ENCODE measurements at regions of chr10 and their contacts with region 1.

Region 1: DNA sequence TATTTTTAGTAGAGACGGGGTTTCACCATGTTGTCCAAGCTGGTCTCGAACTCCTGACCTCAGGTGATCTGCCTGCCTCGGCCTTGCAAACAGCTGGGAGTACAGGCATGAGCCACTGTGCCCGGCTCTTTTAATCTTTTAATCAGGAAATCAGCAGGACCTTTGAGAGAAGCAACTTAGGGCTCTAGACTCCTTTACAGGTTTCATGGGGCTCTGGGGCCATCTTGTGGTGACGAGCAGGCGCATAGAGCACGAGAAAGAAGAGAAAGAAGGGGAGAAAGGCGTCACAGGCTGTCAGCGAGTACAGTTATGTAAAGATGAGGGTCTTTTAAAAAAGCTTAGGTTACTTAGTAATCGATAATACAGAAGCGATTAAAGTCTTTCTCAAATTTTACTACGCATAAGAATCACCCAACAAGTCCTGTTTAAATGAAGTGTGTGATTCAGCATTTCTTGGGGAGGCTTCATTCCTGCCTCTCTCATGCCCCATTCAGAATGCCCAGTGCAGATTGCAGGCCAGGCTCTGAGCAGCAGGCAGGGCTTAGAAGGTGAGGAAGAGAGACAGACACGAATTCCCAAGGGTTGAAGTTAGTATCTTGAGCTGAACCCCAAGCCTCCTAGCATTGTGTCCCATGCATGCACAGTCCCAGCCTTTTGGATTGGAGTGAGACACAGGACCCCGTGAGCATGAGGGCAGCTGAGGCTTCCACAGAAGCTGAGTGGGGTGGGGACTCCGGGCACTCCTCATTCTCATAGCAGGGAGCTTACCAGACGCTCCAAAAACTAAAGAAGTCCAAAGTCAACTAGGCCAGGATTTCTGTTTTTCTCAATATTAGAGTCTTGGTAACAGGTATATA is 23.6 kb upstream of the PFKP start:
- DNase-seq: peak; percentile 53
- H3K4me3 Mint-ChIP-seq: no peak overlapping the region
- H3K27ac Mint-ChIP-seq: no peak overlapping the region
- H3K4me1 Mint-ChIP-seq: no peaks in the 10 kb centered on the region
- H3K27me3 Mint-ChIP-seq: peaks cover 15% of the 10 kb centered on the region

Region 2: DNA sequence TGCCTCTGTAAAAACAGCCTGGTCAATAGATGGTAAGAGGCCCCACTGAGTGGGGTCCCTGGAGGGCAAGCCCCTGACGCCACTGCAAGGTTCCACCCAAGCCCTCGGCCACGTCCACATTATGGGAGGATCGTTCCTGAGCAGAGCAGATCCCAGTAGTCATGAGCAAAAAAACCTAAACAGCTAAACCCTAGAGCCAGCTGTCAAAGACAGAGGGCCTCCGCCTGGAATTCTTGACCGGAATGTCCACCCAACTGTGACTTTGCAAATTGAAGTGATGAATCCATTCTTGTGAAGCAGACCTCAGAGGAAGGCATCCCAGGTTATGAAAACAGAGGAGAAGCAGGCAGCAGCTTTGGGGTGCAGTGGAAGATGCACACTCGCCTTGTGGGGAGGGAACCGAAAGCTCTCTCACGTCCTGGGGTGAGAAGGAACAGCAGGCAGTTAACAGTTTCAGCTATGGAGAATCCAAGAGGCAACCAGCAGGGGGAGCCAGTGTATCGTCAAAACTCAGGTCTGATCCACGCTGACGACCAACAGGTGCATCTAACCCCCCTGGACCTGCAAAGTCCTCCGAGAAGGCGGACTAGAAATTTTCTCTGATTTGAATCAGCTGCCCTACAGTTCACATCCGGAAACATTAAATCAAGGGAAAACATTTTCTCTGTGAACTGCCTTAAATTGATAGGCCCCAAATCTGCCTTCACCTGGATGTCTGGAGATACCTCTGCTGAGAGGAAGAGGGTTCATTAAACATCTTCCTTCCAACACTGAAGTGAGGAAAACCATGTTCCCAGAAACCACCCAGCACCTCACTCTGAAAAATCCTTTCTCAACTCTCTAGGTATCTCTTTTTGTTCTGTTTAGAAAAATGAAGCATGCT is 115.5 kb before region 1 on chr10:
- CTCF ChIA-PET with region 1: interaction called, 18 read pairs
- POLR2A ChIA-PET with region 1: no interaction called
- DNase-seq: peak; percentile 75
- H3K4me3 Mint-ChIP-seq: no peak overlapping the region
- H3K27ac Mint-ChIP-seq: no peak overlapping the region
- H3K4me1 Mint-ChIP-seq: peaks cover 7% of the 10 kb centered on the region
- H3K27me3 Mint-ChIP-seq: peaks cover 22% of the 10 kb centered on the region

Measured in activated CD4-positive, alpha-beta memory T cell treated with anti-CD3 and anti-CD28 coated beads, Interleukin-2, amount 10 ng/mL, durations not matched to agents 7 days and 5 days (primary cell).